GM12878 (cell line): ENCODE measurements at regions of chr1 and their contacts with region 1.

Region 1: GRCh38 chr1:247390116-247390791 is 25.7 kb upstream of the NLRP3 start:
- DNase-seq: peak; percentile 92
- ATAC-seq: peak; percentile 98
- H3K4me3 ChIP-seq: no peak overlapping the region
- H3K27ac ChIP-seq: no peak overlapping the region
- H3K4me1 ChIP-seq: peaks cover 33% of the 10 kb centered on the region
- H3K27me3 ChIP-seq: no peaks in the 10 kb centered on the region
- CTCF ChIP-seq: peak; percentile 92 to 95 (median 94)
- EP300 ChIP-seq: peak; percentile 57 to 91; a peak in 3 of 4 replicates
- POLR2A ChIP-seq: no peak
- RAD21 ChIP-seq: peak; percentile 94

Region 2: GRCh38 chr1:247373721-247374141 is 16.5 kb before region 1 on chr1:
- CTCF ChIA-PET with region 1: interaction called, 35 read pairs
- POLR2A ChIA-PET with region 1: no interaction called
- RAD21 ChIA-PET with region 1: interaction called, 44 read pairs
- SMC1A ChIA-PET with region 1: interaction called, 33 read pairs
- in situ Hi-C with region 1: no loop called
- intact Hi-C with region 1: no loop called
- DNase-seq: no peak
- ATAC-seq: peak; percentile 94
- H3K4me3 ChIP-seq: no peak overlapping the region
- H3K27ac ChIP-seq: no peak overlapping the region
- H3K4me1 ChIP-seq: no peaks in the 10 kb centered on the region
- H3K27me3 ChIP-seq: no peaks in the 10 kb centered on the region
- CTCF ChIP-seq: peak; percentile 29 to 62 (median 51); a peak in 5 of 6 replicates
- EP300 ChIP-seq: no peak
- POLR2A ChIP-seq: no peak
- RAD21 ChIP-seq: 0 out of 2 replicates have a peak, but pooled peaks have one; percentile 15

Region 3: DNA sequence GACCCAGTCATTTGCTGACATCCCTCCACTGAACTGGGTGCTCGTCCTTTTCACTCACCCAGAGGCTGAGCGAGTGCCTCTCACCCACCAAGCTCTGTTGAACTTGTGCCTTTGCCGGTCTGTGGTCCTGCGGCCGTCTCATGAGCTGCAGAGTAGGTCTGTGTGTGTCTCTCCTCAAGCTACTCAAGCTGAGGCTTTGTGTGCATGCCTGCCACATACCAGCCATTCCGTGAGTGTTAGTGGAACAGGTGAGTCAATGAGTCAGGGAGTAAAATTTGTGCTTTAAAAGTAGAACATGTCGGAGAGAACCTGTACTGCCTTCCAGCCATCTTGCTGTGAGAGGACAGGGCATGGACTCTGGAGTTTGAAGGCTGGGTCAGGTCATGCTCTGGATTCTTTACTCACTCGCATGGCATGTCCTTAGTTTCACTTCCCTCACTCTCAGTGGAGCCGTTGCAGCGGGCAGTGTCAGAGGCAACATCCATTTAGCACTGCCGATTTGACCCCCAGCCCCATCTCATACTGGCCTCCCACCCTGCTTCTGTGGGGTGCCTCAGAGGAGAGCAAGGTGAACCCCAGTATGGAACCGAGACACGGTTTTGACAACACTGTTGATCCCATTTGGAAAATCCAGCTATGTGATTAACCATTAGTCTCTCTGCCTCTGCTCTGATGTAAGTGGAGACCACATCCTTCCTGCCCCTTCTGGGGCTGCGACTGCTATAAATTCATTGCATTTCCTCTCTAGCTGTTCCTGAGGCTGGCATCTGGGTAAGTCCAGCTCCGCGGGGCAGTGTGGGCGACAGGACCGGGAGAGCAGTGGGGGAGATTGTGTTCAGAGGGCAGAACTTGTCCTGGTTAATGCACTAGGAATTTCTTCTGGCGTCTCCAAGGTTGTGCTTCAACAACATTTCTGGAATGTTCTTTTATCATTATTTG is 25.4 kb after region 1 on chr1 and contains the start of gene NLRP3:
- CTCF ChIA-PET with region 1: interaction called, 13 read pairs
- POLR2A ChIA-PET with region 1: interaction called, 11 read pairs
- RAD21 ChIA-PET with region 1: interaction called, 16 read pairs
- SMC1A ChIA-PET with region 1: interaction called, 28 read pairs
- in situ Hi-C with region 1: no loop called
- intact Hi-C with region 1: no loop called
- DNase-seq: no peak
- ATAC-seq: peak; percentile 84
- H3K4me3 ChIP-seq: no peak within 1 kb of the TSS
- H3K27ac ChIP-seq: no peak within 1 kb of the TSS
- H3K4me1 ChIP-seq: peaks cover 14% of the 10 kb centered on the region
- H3K27me3 ChIP-seq: peaks cover 0 to 10% of the 10 kb centered on the region in 2 experiments; a peak in 2 of 4 replicates
- CTCF ChIP-seq: no peak
- EP300 ChIP-seq: no peak
- POLR2A ChIP-seq: no peak
- RAD21 ChIP-seq: no peak
- polyA plus RNA-seq, gene NLRP3: 2.5 to 3.4 TPM

Region 4: DNA sequence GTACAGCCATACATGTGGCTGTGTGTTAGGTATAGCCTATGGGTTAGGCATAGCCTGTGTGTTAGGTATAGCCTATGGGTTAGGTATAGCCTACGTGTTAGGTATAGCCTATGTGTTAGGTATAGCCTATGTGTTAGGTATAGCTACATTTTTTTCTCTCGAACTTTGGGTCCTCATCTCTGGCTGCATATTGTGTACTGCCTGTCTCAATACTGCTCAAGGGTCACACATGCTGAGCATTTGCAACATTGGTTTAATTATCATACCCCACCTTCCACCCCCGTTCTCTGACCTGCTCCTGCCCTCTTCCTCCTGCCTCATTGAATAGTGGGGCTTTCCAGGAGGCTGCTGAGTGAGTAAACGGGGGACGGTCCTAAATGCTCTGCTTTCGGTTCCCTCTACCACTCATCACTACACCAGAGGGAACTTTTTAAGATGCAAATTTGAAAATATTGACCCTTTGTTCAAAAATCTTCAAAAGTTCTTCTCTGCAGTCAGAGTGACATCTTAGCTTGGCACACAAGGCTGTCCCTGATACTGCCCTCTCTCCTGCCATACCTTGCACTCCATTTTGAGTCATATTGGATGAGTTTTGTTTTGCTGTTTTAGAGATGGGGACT is 49.9 kb after region 1 on chr1:
- CTCF ChIA-PET with region 1: interaction called, 31 read pairs
- POLR2A ChIA-PET with region 1: interaction called, 10 read pairs
- RAD21 ChIA-PET with region 1: interaction called, 25 read pairs
- SMC1A ChIA-PET with region 1: interaction called, 80 read pairs
- in situ Hi-C with region 1: no loop called
- intact Hi-C with region 1: loop called (anchors 1 kb)
- DNase-seq: peak; percentile 81
- ATAC-seq: peak; percentile 96
- H3K4me3 ChIP-seq: no peak overlapping the region; the same call in 1 of the 2 replicates
- H3K27ac ChIP-seq: peak overlapping the region; percentile 63; the same call in 1 of the 2 replicates
- H3K4me1 ChIP-seq: peaks cover 29% of the 10 kb centered on the region
- H3K27me3 ChIP-seq: no peaks in the 10 kb centered on the region; a peak in 1 of 4 replicates
- CTCF ChIP-seq: no peak
- EP300 ChIP-seq: peak; percentile 92 to 95; a peak in 3 of 4 replicates
- POLR2A ChIP-seq: no peak
- RAD21 ChIP-seq: peak; percentile 13; the same call in 1 of the 2 replicates

Region 5: GRCh38 chr1:247487057-247487456 is 96.8 kb after region 1 on chr1:
- CTCF ChIA-PET with region 1: interaction called, 197 read pairs
- POLR2A ChIA-PET with region 1: interaction called, 10 read pairs
- RAD21 ChIA-PET with region 1: interaction called, 140 read pairs
- SMC1A ChIA-PET with region 1: interaction called, 174 read pairs
- in situ Hi-C with region 1: no loop called
- intact Hi-C with region 1: loop called (anchors 1 kb)
- DNase-seq: peak; percentile 28
- ATAC-seq: peak; percentile 97
- H3K4me3 ChIP-seq: no peak overlapping the region
- H3K27ac ChIP-seq: no peak overlapping the region
- H3K4me1 ChIP-seq: no peaks in the 10 kb centered on the region
- H3K27me3 ChIP-seq: peaks cover 0 to under 1% of the 10 kb centered on the region in 2 experiments; a peak in 2 of 4 replicates
- CTCF ChIP-seq: peak; percentile 58 to 79 (median 65)
- EP300 ChIP-seq: no peak
- POLR2A ChIP-seq: no peak
- RAD21 ChIP-seq: peak; percentile 99